ENCODE measurements at regions of chr10 and their contacts with region 1.

Region 1: GRCh38 chr10:90930070-90930837 is 9.4 kb upstream of the ANKRD1 start:
- DNase-seq: peak; percentile 90
- H3K4me3 ChIP-seq: peak overlapping the region in 1 of 3 experiments; percentile 4
- H3K27ac ChIP-seq: peak overlapping the region; percentile 86
- H3K4me1 ChIP-seq: peaks cover 65% of the 10 kb centered on the region
- H3K27me3 ChIP-seq: no peaks in the 10 kb centered on the region
- CTCF ChIP-seq: no peak
- POLR2A ChIP-seq: peak; percentile 46

Region 2: DNA sequence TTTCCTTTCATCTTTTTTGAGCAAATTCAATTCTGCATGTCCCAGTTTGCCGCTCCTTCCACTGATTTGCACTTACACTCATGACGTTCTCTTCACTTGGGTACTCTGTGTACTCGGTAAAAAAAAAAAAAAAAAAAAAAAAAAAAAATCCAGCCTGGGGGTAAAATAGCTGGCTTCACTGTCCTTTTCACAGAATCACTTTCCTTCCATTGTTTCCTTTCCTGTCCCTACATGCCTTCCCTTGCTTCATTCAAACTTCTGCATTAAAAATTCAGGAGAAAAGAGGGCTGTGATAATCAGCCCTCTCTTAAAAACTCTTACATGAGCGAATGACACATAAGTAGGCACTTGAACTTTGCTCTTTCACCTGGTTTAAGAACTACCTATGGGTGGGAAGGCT is 18.1 kb before region 1 on chr10:
- CTCF ChIA-PET with region 1: interaction called, 30 read pairs
- POLR2A ChIA-PET with region 1: interaction called, 48 read pairs
- dilution Hi-C with region 1: no loop called
- intact Hi-C with region 1: loop called (anchors 2 kb)
- DNase-seq: no peak
- H3K4me3 ChIP-seq: no peak overlapping the region
- H3K27ac ChIP-seq: peak overlapping the region; percentile 25
- H3K4me1 ChIP-seq: peaks cover 44% of the 10 kb centered on the region
- H3K27me3 ChIP-seq: no peaks in the 10 kb centered on the region
- CTCF ChIP-seq: no peak
- POLR2A ChIP-seq: no peak

Region 3: GRCh38 chr10:90960355-90960814 is 30.1 kb after region 1 on chr10:
- CTCF ChIA-PET with region 1: no interaction called
- POLR2A ChIA-PET with region 1: no interaction called
- dilution Hi-C with region 1: no loop called
- intact Hi-C with region 1: loop called (anchors 1 kb)
- DNase-seq: peak; percentile 39
- H3K4me3 ChIP-seq: no peak overlapping the region
- H3K27ac ChIP-seq: no peak overlapping the region
- H3K4me1 ChIP-seq: peaks cover 11% of the 10 kb centered on the region
- H3K27me3 ChIP-seq: no peaks in the 10 kb centered on the region
- CTCF ChIP-seq: no peak
- POLR2A ChIP-seq: no peak

Region 4: DNA sequence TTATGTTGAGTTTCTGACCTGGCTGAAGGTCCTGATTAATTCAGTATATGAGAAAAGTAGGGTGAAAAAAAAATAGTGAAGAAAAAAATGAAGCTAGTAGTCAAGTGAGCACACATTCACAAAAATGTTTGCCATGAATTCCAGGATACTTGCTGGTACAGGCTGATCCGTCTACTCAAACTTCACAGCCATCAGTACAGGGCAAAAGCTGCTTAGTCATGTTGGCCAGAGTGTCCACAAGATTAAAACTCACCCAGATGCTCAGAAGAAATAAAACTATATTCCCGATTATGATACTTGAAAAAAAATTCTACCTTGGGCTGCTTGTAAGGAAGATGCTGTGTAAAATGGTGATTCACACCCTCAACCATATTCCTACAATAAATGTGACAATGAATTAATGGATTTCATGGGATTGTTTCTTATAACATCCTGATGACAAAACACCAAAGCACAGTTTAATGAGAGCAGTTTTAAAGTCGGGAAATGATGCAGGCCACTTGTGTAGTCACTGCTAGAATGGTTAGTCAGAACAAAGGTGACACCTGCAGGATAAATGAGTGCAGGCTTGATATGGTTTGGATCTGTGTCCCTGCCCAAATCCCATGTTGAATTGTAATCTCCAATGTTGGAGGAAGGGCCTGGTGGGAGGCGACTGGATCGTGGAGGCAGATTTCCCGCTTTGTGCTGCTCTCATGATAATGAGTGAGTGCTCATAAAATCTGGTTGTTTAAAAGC is 39.9 kb after region 1 on chr10:
- CTCF ChIA-PET with region 1: interaction called, 5 read pairs
- POLR2A ChIA-PET with region 1: no interaction called
- dilution Hi-C with region 1: no loop called
- intact Hi-C with region 1: loop called (anchors 1 kb)
- DNase-seq: no peak
- H3K4me3 ChIP-seq: no peak overlapping the region
- H3K27ac ChIP-seq: peak overlapping the region; percentile 28
- H3K4me1 ChIP-seq: peaks cover 8% of the 10 kb centered on the region
- H3K27me3 ChIP-seq: no peaks in the 10 kb centered on the region
- CTCF ChIP-seq: no peak
- POLR2A ChIP-seq: no peak

Region 5: GRCh38 chr10:91006001-91006751 is 75.9 kb after region 1 on chr10:
- CTCF ChIA-PET with region 1: no interaction called
- POLR2A ChIA-PET with region 1: no interaction called
- dilution Hi-C with region 1: no loop called
- intact Hi-C with region 1: loop called (anchors 1 kb)
- DNase-seq: peak; percentile 90
- H3K4me3 ChIP-seq: no peak overlapping the region
- H3K27ac ChIP-seq: no peak overlapping the region
- H3K4me1 ChIP-seq: no peaks in the 10 kb centered on the region
- H3K27me3 ChIP-seq: no peaks in the 10 kb centered on the region
- CTCF ChIP-seq: peak; percentile 83 to 87
- POLR2A ChIP-seq: no peak

Region 6: GRCh38 chr10:91163269-91163868 is 233.1 kb after region 1 on chr10:
- CTCF ChIA-PET with region 1: no interaction called
- POLR2A ChIA-PET with region 1: interaction called, 3 read pairs
- dilution Hi-C with region 1: no loop called
- intact Hi-C with region 1: loop called (anchors 5 kb)
- DNase-seq: peak; percentile 55
- H3K4me3 ChIP-seq: peak overlapping the region; percentile 61 to 84 (median 71)
- H3K27ac ChIP-seq: peak overlapping the region; percentile 74
- H3K4me1 ChIP-seq: peaks cover 6% of the 10 kb centered on the region
- H3K27me3 ChIP-seq: no peaks in the 10 kb centered on the region
- CTCF ChIP-seq: no peak
- POLR2A ChIP-seq: peak; percentile 21

Region 7: GRCh38 chr10:91901784-91902677 is 971.8 kb after region 1 on chr10:
- CTCF ChIA-PET with region 1: no interaction called
- POLR2A ChIA-PET with region 1: no interaction called
- dilution Hi-C with region 1: no loop called
- intact Hi-C with region 1: loop called (anchors 5 kb)
- DNase-seq: peak; percentile 97
- H3K4me3 ChIP-seq: no peak overlapping the region
- H3K27ac ChIP-seq: peak overlapping the region; percentile 63
- H3K4me1 ChIP-seq: peaks cover 24% of the 10 kb centered on the region
- H3K27me3 ChIP-seq: no peaks in the 10 kb centered on the region
- CTCF ChIP-seq: no peak
- POLR2A ChIP-seq: no peak

Measured in endothelial cell of umbilical vein (primary cell).